ENCODE measurements at regions of chr6 and their contacts with region 1.

Region 1: DNA sequence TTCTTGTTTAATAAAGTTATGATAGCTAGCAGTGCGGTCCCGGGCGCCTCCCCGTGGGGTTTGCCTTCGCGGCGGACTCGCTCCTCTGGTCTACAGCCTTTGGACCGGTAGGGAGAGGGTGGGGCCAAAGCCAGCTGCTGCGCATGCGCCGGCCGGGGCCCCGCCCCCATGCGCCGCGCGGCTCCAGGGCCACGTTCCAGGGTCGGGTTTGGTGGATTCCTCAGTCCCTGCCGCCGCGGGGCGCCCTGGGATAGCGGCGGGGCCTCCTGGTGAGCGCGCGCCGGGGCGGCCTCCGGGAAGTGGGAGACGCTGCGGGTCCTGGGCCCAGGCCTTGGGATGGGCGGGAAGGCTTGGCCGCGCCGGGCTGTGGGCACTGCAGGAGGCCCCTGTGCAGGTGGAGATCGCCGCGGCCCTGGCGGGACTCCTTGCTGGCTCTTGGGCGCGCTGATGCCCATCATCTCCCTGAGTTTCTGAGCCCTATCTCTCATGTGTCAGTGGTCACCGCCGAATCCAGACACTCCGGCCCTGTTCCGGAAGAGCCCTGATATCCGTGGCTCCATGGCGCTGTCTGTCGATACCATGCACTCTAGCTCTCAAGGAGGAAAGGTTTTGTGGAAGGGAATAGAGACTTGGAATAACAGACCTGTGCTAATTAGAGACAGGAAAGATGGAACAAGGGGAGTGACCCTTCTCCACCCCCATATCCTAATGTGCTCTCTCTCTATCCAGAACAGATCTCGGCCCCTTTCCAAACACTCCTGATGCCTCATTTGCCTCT is at the start of gene VARS2:
- DNase-seq: peak; percentile 72 to 95
- H3K4me3 ChIP-seq: peak within 1 kb of the TSS; percentile 60 to 65
- H3K27ac ChIP-seq: peak within 1 kb of the TSS; percentile 78 to 86
- H3K4me1 ChIP-seq: peaks cover 4 to 16% of the 10 kb centered on the region in 2 donors
- H3K27me3 ChIP-seq: no peaks in the 10 kb centered on the region
- CTCF ChIP-seq: peak in 2 of 3 experiments; percentile 17 to 45
- total RNA-seq, gene VARS2: 5.7 TPM

Region 2: DNA sequence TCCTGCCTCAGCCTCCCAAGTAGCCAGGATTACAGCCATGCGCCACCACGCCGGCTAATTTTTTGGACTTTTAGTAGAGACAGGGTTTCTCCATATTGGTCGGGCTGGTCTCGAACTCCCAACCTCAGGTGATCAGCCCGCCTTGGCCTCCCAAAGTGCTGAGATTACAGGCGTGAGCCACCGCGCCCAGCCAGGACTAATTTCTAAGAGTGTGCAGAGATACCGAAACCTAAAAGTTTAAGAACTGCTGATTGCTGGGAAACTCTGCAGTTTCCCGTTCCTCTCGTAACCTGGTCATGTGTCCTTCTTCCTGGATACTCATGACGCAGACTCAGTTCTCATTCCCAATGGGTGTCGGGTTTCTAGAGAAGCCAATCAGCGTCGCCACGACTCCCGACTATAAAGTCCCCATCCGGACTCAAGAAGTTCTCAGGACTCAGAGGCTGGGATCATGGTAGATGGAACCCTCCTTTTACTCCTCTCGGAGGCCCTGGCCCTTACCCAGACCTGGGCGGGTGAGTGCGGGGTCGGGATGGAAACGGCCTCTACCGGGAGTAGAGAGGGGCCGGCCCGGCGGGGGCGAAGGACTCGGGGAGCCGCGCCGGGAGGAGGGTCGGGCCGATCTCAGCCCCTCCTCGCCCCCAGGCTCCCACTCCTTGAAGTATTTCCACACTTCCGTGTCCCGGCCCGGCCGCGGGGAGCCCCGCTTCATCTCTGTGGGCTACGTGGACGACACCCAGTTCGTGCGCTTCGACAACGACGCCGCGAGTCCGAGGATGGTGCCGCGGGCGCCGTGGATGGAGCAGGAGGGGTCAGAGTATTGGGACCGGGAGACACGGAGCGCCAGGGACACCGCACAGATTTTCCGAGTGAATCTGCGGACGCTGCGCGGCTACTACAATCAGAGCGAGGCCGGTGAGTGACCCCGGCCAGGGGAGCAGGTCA is 424.9 kb before region 1 on chr6 and contains the start of gene HLA-E:
- intact Hi-C with region 1: loop called (anchors 10 kb)
- DNase-seq: peak; percentile 90 to 99
- H3K4me3 ChIP-seq: peak within 1 kb of the TSS; percentile 91 to 97
- H3K27ac ChIP-seq: peak within 1 kb of the TSS; percentile 98 to 99
- H3K4me1 ChIP-seq: peaks cover 6 to 14% of the 10 kb centered on the region in 2 donors
- H3K27me3 ChIP-seq: no peaks in the 10 kb centered on the region
- CTCF ChIP-seq: no peak
- total RNA-seq, gene HLA-E: 896 TPM

Region 3: DNA sequence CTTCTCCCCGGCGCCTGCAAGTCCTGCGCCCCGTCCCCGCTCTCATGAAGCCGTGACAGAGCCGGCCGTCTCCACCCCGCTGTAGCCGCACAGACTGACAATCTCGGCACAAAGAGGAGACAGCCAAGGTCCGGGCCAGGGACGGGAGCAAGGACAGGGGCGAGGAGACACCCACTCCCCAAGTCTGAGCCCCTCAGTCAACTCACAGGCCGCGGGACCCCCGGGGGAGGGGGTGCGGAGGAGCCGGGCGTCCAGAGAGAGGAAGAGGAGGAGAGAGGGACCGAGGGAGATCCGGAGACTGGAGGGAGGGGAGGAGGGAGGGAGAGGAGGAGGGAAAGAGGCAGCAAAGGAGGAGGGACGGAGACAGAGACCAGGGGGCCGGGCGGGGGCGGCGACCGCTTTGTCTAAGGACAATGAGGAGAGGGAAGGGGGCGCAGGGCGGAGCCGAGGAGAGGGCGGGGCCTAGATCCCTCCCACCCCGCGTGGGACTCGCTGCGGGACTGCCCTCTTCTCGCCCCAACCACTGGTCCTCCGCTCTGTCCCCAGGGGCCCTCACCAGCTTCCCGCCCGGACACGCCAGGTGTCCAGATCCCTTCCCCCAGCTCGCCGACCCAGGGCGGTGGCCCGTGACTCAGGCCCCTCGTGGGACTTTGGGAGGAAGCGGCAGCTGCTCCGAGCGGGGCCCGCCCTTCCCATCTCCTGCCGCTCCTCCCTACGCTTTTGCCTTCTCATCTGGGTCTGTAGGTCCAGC is 227.2 kb before region 1 on chr6:
- intact Hi-C with region 1: no loop called
- DNase-seq: peak; percentile 91 to 98
- H3K4me3 ChIP-seq: peak overlapping the region; percentile 75 to 91
- H3K27ac ChIP-seq: peak overlapping the region; percentile 99
- H3K4me1 ChIP-seq: peaks cover 7 to 31% of the 10 kb centered on the region in 2 donors
- H3K27me3 ChIP-seq: no peaks in the 10 kb centered on the region
- CTCF ChIP-seq: no peak

Region 4: GRCh38 chr6:30752157-30752927 is 161.9 kb before region 1 on chr6:
- intact Hi-C with region 1: no loop called
- DNase-seq: peak; percentile 95 to 99
- H3K4me3 ChIP-seq: peak overlapping the region in 1 of 2 donors; percentile 2
- H3K27ac ChIP-seq: peak overlapping the region; percentile 91 to 92
- H3K4me1 ChIP-seq: peaks cover 18 to 28% of the 10 kb centered on the region in 2 donors
- H3K27me3 ChIP-seq: no peaks in the 10 kb centered on the region
- CTCF ChIP-seq: no peak

Region 5: GRCh38 chr6:30816791-30817739 is 97.2 kb before region 1 on chr6:
- intact Hi-C with region 1: no loop called
- DNase-seq: no peak
- H3K4me3 ChIP-seq: no peak overlapping the region
- H3K27ac ChIP-seq: peak overlapping the region in 1 of 2 donors; percentile 18
- H3K4me1 ChIP-seq: peaks cover 3 to 29% of the 10 kb centered on the region in 2 donors
- H3K27me3 ChIP-seq: no peaks in the 10 kb centered on the region
- CTCF ChIP-seq: no peak

Region 6: GRCh38 chr6:30828027-30828960 is 86.0 kb before region 1 on chr6:
- intact Hi-C with region 1: loop called (anchors 1 kb)
- DNase-seq: peak; percentile 68 to 94
- H3K4me3 ChIP-seq: peak overlapping the region; percentile 13 to 20
- H3K27ac ChIP-seq: peak overlapping the region; percentile 64 to 68
- H3K4me1 ChIP-seq: peaks cover 5 to 14% of the 10 kb centered on the region in 2 donors
- H3K27me3 ChIP-seq: no peaks in the 10 kb centered on the region
- CTCF ChIP-seq: peak; percentile 90 to 92 (median 91)

Region 7: DNA sequence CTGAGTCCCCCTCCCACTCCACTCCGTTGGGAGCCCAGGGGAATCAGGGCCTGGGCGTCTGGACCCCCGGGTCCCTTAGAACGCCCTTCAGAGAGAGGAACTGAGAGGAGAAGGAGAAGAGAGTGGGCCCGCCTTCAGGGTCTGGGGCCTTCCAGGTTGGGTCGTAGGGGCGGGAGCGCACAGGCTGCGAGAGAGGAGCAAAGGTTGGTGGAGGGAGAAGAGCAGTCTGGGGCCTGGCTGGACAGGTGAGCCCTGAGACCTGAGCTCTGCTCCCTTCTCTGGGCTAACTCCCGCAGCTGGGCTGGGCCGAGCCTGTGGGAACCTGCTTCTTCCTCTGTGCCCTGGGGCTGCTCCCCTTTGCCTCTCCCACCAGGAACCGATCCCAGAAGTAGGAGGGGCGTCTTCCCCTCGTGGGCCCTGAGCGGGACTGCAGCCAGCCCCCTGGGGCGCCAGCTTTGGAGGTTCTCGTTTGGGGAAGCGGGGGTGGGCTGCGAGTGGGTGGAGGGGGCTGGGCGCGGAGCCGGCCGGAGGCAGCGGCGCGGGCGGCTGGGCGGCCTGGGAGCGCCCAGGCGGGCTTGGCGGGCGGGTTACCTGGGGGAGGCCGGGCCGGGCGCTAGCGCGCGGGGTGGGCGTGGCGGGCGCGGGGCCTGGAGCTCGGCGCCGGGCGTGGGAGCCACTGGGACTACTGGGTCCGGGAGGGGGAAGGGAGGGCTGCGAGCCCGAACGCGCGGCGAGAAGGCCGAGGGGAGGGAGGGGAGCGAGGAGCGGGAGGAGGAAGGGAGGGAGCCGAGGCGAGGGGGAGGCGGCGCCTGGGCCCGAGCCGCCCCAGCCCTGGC is 30.4 kb before region 1 on chr6 and contains the start of gene DDR1:
- intact Hi-C with region 1: loop called (anchors 2 kb)
- DNase-seq: peak in 1 of 2 donors; percentile 81
- H3K4me3 ChIP-seq: peak within 1 kb of the TSS; percentile 78 to 87
- H3K27ac ChIP-seq: peak within 1 kb of the TSS; percentile 83 to 90
- H3K4me1 ChIP-seq: peaks cover 0 to 23% of the 10 kb centered on the region in 2 donors
- H3K27me3 ChIP-seq: no peaks in the 10 kb centered on the region
- CTCF ChIP-seq: no peak
- total RNA-seq, gene DDR1: 18.8 TPM

Region 8: GRCh38 chr6:31068669-31069340 is 154.5 kb after region 1 on chr6:
- intact Hi-C with region 1: loop called (anchors 1 kb)
- DNase-seq: peak in 1 of 2 donors; percentile 77
- H3K4me3 ChIP-seq: no peak overlapping the region
- H3K27ac ChIP-seq: no peak overlapping the region
- H3K4me1 ChIP-seq: peaks cover 0 to 5% of the 10 kb centered on the region in 2 donors
- H3K27me3 ChIP-seq: no peaks in the 10 kb centered on the region
- CTCF ChIP-seq: peak; percentile 55 to 67 (median 59)

Region 9: GRCh38 chr6:31087494-31088089 is 173.3 kb after region 1 on chr6:
- intact Hi-C with region 1: loop called (anchors 2 kb)
- DNase-seq: peak; percentile 16 to 90
- H3K4me3 ChIP-seq: no peak overlapping the region
- H3K27ac ChIP-seq: no peak overlapping the region
- H3K4me1 ChIP-seq: peaks cover 0 to 5% of the 10 kb centered on the region in 2 donors
- H3K27me3 ChIP-seq: no peaks in the 10 kb centered on the region
- CTCF ChIP-seq: peak; percentile 71 to 79 (median 72)